Ascending aorta (tissue), 2 donors: ENCODE measurements at regions of chr11 and their contacts with region 1.

Region 1: GRCh38 chr11:76782526-76783293 is 446 bp upstream of the TSKU start:
- DNase-seq: peak; percentile 43 to 93
- H3K4me3 ChIP-seq: peak overlapping the region; percentile 81 to 86
- H3K27ac ChIP-seq: peak overlapping the region; percentile 93 to 95
- H3K4me1 ChIP-seq: peaks cover 0 to 8% of the 10 kb centered on the region in 2 donors
- H3K27me3 ChIP-seq: no peaks in the 10 kb centered on the region
- CTCF ChIP-seq: no peak

Region 2: DNA sequence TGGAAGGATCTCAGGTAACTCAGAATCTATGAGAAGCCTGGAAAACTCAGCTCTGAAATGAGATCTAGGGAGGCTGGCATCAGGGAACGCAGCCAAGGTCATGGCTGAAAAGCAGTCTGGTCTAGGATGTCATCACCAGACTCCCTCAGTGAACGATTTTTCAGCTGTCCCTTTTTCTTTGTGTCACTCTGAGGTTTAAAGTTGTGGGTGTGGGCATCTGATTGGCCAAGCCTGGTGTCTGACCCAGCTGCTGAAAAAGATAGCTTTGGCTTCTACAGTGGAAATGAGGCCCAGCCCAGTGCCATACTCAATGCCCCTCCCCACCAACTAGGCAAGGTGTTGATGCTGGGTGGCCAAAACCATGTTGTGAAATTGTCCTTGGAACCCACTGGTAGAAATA is 1368.8 kb before region 1 on chr11:
- intact Hi-C with region 1: loop called (anchors 10 kb)
- DNase-seq: no peak
- H3K4me3 ChIP-seq: no peak overlapping the region
- H3K27ac ChIP-seq: peak overlapping the region in 1 of 2 donors; percentile 31
- H3K4me1 ChIP-seq: peaks cover 4 to 15% of the 10 kb centered on the region in 2 donors
- H3K27me3 ChIP-seq: no peaks in the 10 kb centered on the region
- CTCF ChIP-seq: no peak

Region 3: DNA sequence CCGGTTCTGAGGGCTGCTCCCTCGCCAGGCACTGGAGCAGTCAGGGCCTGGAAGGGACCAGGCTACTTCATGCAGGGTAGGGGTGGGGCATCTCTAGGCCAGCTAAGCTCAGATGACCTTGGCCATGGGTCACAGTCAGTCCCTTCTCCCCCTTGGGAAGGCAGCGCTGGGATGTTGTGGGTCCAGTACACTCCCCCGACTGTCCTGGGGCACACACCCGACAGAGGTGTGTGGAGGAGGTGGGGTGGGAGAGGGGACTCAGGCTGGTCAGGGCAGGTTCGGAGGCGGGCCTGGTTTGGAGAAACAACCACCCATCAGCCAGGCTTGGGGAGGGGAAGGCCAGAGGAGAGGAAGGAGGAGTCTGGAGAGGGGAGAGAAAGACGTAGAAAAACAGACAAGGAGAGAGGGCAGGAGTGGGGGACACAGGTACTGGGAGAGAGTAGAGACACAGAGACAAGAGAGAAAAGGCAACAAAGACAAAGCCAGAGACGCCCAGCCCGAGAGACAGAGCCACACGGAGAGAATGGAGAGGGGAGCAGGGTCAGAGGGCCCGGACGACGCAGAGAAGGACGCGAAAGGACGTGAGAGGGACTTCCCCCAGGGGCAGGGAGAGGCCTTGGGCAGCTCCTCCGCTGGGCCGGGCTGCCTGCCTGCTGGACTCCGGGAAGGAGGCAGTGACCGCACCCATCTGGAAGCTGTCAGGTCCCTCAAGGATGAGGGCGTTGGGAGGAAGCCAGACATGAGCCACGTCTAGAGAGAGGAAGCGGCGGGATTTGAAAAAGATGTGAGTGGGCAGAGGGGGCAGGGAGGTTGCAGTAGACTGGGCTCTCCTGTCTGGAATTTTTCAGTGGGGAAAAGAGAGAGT is 30.2 kb before region 1 on chr11:
- intact Hi-C with region 1: loop called (anchors 2 kb)
- DNase-seq: peak; percentile 65 to 90
- H3K4me3 ChIP-seq: peak overlapping the region in 1 of 2 donors; percentile 0
- H3K27ac ChIP-seq: peak overlapping the region; percentile 39 to 66
- H3K4me1 ChIP-seq: peaks cover 0 to 12% of the 10 kb centered on the region in 2 donors
- H3K27me3 ChIP-seq: no peaks in the 10 kb centered on the region
- CTCF ChIP-seq: no peak

Region 4: GRCh38 chr11:76770642-76771445 is 11.9 kb before region 1 on chr11:
- intact Hi-C with region 1: loop called (anchors 2 kb)
- DNase-seq: peak in 1 of 2 donors; percentile 76
- H3K4me3 ChIP-seq: no peak overlapping the region
- H3K27ac ChIP-seq: peak overlapping the region; percentile 78 to 87
- H3K4me1 ChIP-seq: peaks cover 19 to 51% of the 10 kb centered on the region in 2 donors
- H3K27me3 ChIP-seq: no peaks in the 10 kb centered on the region
- CTCF ChIP-seq: no peak

Region 5: GRCh38 chr11:76799066-76799804 is 16.5 kb after region 1 on chr11:
- intact Hi-C with region 1: loop called (anchors 2 kb)
- DNase-seq: peak in 1 of 2 donors; percentile 93
- H3K4me3 ChIP-seq: peak overlapping the region; percentile 37 to 46
- H3K27ac ChIP-seq: peak overlapping the region; percentile 36 to 79
- H3K4me1 ChIP-seq: peaks cover 0 to 7% of the 10 kb centered on the region in 2 donors
- H3K27me3 ChIP-seq: no peaks in the 10 kb centered on the region
- CTCF ChIP-seq: peak; percentile 95 to 96 (median 96)